ENCODE measurements at regions of chr13 and their contacts with region 1.

Region 1: DNA sequence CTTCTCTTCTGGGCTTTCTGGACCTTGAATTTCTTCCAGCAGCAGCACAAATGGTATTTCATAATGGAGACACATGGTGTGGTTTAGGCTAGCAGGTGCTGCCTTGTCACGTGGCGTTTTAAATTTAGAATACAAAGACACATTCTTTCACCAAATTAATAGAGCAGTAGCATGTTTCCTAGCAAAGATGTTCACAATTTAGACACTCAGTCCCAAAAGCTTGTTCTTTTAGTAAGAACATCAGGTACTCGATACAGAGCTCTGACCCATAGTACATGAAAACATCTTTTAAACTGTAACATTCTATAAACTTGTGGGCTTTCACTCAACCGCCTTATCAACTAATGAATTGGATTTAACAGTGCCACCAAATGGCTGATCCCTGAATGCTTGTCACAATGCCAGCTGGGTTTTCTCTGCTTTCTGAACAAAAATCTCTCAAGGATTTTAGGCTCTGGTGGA is 290.1 kb downstream of the DCLK1 start:
- DNase-seq: peak in 2 of 10 donors; percentile 37 to 47

Region 2: DNA sequence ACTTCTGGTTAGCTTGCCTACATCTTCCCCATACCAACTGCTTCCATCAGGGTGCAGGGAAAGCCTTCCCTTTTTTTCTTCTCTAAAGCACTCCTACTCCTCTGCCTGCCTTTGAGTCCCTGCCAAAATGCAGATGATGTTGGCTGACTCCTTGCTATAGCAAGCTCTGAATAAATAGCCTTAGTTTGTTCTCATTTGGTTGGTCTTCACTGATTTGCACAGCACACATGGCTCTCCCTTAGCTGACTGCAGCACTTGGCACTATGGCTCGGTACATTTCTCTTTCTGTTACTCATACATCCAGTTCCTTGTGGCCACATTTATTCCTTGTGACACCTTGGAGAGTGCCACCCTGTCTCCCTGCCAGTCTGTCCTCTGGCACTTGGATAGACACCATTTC is 40.3 kb after region 1 on chr13:
- intact Hi-C with region 1: loop called (anchors 5 kb)
- DNase-seq: peak; percentile 30 to 93 (median 64)

Measured in posterior cingulate gyrus (tissue), 11 donors.